ENCODE measurements at regions of chr17 and their contacts with region 1.

Region 1: DNA sequence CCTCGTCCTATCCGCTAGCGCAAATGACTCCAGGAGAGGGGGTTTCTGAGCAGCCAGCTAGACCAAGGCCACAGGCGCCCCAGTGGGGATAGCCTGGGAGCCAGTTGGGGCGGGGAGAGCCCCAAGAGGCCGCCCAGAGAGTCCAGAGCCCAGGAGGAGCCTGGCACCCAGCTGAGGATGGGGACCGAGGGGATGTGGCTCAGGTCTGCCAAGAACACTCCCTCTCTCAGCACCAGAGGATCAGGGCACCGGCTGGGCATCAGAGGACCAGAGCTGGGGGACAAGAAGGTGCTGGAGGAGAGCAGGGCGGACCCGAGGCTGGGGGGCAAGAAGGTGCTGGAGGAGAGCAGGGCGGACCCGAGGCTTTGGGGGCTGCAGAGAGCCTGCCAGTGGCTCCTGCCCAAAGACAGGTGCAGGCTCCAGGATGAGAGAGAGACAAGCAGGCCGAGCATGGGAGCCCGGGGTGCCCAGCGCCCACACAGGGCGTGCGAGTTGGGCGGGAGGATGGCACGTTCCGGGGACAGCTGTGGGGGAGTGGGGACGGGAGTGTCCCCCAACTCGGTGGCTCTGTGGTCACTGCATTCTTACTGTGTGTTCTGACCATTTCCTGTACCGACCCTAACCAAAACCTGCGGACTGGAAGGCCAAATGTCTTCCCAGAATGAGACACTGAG is 39.4 kb downstream of the TIMM22 start:
- DNase-seq: no peak
- ATAC-seq: no peak
- H3K4me3 ChIP-seq: no peak overlapping the region
- H3K4me3 Mint-ChIP-seq: no peak overlapping the region
- H3K27ac ChIP-seq: no peak overlapping the region
- H3K27ac Mint-ChIP-seq: no peak overlapping the region
- H3K4me1 ChIP-seq: peaks cover 0 to 4% of the 10 kb centered on the region in 2 experiments
- H3K4me1 Mint-ChIP-seq: peaks cover 0 to 1% (median 0%) of the 10 kb centered on the region in 3 donors
- H3K27me3 ChIP-seq: no peaks in the 10 kb centered on the region
- H3K27me3 Mint-ChIP-seq: no peaks in the 10 kb centered on the region

Region 2: DNA sequence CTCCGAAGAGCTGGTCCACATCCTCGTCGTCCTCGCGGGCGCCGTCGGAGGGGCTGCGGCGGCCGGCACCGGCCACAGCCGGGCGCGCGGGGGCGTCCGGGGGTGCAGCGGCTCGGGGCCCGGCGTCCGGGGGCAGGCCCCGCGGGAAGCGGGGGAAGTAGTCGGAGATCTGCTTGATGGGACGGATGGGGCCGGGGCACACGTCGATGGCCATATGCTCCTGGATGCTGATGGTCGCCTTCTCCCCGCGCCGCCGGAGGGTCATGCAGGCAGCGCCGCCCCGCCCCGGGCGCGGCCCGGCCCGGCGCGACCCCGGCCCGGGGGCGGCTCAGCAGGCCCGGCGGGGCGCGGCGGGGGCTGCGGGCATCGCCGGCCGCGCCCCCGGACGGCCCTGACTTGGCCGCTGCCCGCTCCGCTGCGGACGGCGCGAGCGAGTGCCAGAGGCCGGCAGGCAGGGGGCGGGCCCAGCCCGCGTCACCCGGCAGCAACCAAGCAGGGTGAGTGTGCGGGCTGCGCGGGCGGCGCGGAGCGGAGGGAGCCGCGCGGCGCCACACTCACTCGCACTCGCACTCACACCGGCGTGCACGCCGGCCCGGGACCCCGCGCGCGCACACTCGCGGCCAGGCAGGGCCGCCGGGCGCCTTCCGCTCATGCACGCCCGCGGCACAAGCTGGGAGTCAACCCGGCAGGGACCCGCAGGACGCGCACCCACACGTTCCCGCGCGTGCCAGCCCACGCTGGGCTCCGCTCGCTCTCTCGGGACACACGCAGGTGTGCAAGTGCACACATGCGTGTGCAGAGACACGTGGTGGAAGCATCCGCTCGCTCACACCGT is 854.9 kb before region 1 on chr17 and contains the start of gene DOC2B:
- CTCF ChIA-PET with region 1: no interaction called
- POLR2A ChIA-PET with region 1: interaction called in 1 of 2 experiments, 10 read pairs
- DNase-seq: peak in 4 of 35 experiments; percentile 7 to 14 (median 12)
- ATAC-seq: peak; percentile 44 to 72 (median 56)
- H3K4me3 ChIP-seq: peak within 1 kb of the TSS in 1 of 2 donors; percentile 35
- H3K4me3 Mint-ChIP-seq: peak within 1 kb of the TSS; percentile 31 to 71 (median 57)
- H3K27ac ChIP-seq: no peak within 1 kb of the TSS
- H3K27ac Mint-ChIP-seq: no peak within 1 kb of the TSS
- H3K4me1 ChIP-seq: peaks cover 0 to 11% of the 10 kb centered on the region in 2 experiments
- H3K4me1 Mint-ChIP-seq: peaks cover 0 to 25% (median 2%) of the 10 kb centered on the region in 3 donors
- H3K27me3 ChIP-seq: peaks cover 0 to 73% of the 10 kb centered on the region in 2 experiments
- H3K27me3 Mint-ChIP-seq: peaks cover 44 to 66% of the 10 kb centered on the region in 2 donors
- total RNA-seq, gene DOC2B: 0.05 to 0.16 (median 0.09) TPM in 3 of 5 donors, not detected in the others

Region 3: DNA sequence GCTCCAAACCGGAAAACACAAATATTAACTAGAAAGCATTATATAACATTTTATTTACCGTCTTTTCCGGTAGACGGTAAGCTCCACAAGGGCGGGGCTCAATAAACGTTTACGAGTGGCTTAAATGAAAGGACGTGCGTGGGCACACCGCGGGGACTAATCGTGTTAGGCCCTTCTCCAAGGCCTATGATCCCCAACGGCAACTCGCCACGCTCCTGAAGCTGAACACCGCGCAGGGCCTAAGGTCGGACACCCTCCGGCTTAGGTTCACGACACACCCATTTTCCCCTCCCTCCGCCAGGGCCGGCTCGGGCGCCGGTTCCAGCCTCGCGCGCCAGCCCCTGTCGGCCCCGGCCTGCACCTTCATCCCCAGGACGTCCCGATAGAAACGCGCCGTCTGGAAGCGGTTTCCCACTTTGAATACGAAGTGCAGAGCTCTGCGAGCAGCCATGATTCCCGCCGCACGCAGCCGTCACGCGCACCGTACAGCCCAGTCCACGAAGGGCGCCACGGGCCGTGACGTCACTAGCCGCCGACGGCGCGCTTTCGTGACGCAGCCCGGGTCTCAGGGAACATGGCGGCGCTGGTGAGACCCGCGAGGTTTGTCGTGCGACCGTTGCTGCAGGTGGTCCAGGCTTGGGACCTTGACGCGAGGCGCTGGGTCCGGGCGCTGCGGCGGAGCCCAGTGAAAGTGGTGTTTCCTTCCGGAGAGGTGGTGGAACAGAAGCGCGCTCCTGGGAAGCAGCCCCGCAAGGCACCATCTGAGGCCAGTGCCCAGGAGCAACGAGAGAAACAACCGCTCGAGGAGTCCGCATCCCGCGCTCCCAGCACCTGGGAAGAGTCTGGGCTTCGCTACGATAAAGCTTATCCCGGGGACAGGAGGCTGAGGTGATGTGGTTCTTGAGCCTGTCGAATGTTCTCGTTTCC is 254.2 kb before region 1 on chr17 and contains the starts of genes GLOD4 and MRM3:
- CTCF ChIA-PET with region 1: no interaction called
- POLR2A ChIA-PET with region 1: no interaction called
- DNase-seq: peak; percentile 85 to 97 (median 93)
- ATAC-seq: peak; percentile 94 to 96 (median 96)
- H3K4me3 ChIP-seq: peak within 1 kb of the TSS; percentile 92 to 100
- H3K4me3 Mint-ChIP-seq: peak within 1 kb of the TSS; percentile 95 to 99 (median 96)
- H3K27ac ChIP-seq: peak within 1 kb of the TSS; percentile 84
- H3K27ac Mint-ChIP-seq: peak within 1 kb of the TSS; percentile 94 to 95
- H3K4me1 ChIP-seq: peaks cover 15 to 31% of the 10 kb centered on the region in 2 experiments
- H3K4me1 Mint-ChIP-seq: peaks cover 31 to 37% (median 35%) of the 10 kb centered on the region in 3 donors
- H3K27me3 ChIP-seq: no peaks in the 10 kb centered on the region
- H3K27me3 Mint-ChIP-seq: no peaks in the 10 kb centered on the region
- total RNA-seq, gene GLOD4: 66.9 to 85.1 (median 76.8) TPM
- total RNA-seq, gene MRM3: 23.0 to 34.1 (median 25.6) TPM